ENCODE measurements at regions of chr2 and their contacts with region 1.

Region 1: DNA sequence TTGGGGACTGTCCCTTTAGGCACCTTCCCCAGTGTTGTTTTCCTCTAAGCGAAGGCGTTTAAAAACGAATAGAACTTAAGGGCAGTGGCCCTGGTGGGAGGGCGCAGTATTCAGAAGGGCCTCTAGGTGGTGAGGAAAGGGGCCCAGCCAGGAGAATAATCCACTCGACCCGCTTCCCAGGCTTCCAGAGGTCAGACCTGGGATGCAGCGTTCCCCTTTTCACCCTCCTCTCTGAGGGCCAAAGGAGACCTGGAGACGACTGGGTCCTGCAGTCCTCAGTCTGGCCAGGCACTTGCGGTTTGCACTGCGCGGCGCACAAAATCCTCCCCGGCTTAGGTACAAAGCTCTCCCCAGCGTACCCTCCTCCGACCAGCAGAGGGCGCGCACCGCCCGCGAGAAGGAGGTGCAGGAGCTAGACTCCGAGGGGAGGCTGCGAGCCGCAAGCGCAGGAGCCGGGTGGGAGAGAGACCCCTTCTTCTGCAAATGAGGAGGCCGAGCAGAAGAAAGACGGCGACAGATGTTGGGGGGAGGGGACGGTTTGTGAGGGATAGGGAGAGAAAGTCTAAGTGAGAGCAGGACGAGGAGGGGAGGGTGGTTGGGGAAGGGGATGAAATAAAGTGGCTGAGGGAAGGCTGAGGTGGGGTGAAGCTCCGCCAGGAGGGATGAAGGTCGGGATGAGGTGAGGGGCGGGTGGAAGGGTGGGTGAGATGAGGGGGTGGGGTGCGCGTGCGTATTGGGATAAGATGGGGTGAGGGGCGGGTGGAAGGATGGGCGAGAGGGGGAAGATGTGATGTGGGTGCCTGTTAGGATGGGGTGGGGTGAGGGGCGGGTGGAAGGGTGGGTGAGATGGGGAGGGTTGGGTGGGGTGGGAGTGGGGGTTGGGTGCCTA is 4.9 kb downstream of the FEV start:
- DNase-seq: peak in 1 of 2 experiments; percentile 97
- H3K4me3 ChIP-seq: peak overlapping the region in 2 of 4 experiments; percentile 12 to 48; a peak in 4 of 8 replicates
- H3K27ac ChIP-seq: no peak overlapping the region
- H3K4me1 ChIP-seq: peaks cover 0 to 25% (median 19%) of the 10 kb centered on the region in 4 experiments; a peak in 6 of 7 replicates
- H3K27me3 ChIP-seq: peaks cover 54 to 95% (median 79%) of the 10 kb centered on the region in 4 experiments
- CTCF ChIP-seq: peak in 2 of 3 experiments; percentile 94; a peak in 3 of 4 replicates
- EP300 ChIP-seq: no peak; a peak in 1 of 3 replicates
- POLR2A ChIP-seq: no peak
- RAD21 ChIP-seq: peak; percentile 79 to 83

Region 2: DNA sequence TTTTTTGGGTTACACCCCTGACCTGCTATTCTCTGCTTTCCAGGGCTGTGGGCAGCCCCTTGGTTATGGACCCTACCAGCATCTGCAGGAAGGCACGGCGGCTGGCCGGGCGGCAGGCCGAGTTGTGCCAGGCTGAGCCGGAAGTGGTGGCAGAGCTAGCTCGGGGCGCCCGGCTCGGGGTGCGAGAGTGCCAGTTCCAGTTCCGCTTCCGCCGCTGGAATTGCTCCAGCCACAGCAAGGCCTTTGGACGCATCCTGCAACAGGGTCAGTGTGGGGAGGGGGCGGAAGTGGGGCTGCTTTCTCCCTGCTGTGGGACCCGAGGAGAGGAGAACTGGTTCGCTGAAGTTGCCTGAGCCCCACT is 109.1 kb before region 1 on chr2:
- CTCF ChIA-PET with region 1: interaction called, 81 read pairs
- POLR2A ChIA-PET with region 1: interaction called, 9 read pairs
- DNase-seq: no peak
- H3K4me3 ChIP-seq: peak overlapping the region in 1 of 4 experiments; percentile 43; a peak in 2 of 8 replicates
- H3K27ac ChIP-seq: no peak overlapping the region
- H3K4me1 ChIP-seq: peaks cover 0 to 24% (median 12%) of the 10 kb centered on the region in 4 experiments; a peak in 6 of 7 replicates
- H3K27me3 ChIP-seq: peaks cover 89 to 100% (median 96%) of the 10 kb centered on the region in 4 experiments
- CTCF ChIP-seq: no peak
- EP300 ChIP-seq: no peak
- POLR2A ChIP-seq: no peak
- RAD21 ChIP-seq: no peak

Region 3: DNA sequence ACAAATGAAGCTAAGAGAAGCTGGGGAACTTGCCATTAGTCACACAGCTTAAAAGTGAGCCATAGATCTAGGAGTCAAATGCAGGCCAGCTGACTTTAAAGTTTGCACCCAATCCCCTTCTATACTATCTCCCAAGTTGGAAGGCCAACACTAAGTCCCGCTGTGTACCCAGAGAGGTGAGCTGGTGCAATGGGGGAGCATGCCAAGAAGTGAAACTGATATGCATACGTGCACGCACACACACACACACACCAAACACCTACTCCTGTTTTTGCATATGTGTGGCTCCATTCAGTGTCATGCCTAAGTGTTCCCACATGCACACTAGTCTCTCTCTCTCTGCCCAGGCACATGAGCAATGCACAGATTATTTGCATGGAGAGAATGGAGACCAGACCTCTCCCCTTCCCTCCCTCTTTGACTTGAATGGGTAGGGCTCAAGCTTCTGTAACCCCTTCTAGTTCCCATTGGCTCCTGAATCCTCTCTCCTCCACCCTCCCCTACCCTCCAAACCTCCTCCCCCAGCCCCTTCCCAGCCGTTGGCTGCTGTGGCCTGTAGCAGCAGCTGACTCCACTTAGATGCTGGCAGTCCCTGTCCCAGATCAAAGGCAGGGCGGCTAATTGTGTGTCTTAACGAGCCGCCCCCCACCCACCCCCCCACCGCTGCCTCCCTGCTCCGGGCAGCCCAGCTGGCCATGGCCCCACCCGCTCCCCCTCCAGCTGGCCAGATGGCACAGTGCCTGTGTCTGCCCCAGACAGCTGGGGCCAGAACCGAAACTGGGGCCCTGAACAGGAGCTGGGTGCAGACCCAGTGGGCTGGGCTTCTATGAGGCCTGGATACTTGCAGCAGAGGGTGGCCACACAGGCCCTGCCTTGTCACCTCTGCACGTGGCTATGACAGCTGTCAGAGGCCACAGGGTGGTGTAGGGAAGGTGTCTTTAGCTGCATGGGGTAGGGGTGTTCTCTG is 93.8 kb before region 1 on chr2:
- CTCF ChIA-PET with region 1: interaction called, 20 read pairs
- POLR2A ChIA-PET with region 1: no interaction called
- DNase-seq: no peak
- H3K4me3 ChIP-seq: no peak overlapping the region
- H3K27ac ChIP-seq: no peak overlapping the region
- H3K4me1 ChIP-seq: peaks cover 0 to 4% (median 2%) of the 10 kb centered on the region in 4 experiments; a peak in 4 of 7 replicates
- H3K27me3 ChIP-seq: peaks cover 76 to 93% (median 90%) of the 10 kb centered on the region in 4 experiments
- CTCF ChIP-seq: no peak
- EP300 ChIP-seq: no peak
- POLR2A ChIP-seq: no peak
- RAD21 ChIP-seq: no peak

Region 4: DNA sequence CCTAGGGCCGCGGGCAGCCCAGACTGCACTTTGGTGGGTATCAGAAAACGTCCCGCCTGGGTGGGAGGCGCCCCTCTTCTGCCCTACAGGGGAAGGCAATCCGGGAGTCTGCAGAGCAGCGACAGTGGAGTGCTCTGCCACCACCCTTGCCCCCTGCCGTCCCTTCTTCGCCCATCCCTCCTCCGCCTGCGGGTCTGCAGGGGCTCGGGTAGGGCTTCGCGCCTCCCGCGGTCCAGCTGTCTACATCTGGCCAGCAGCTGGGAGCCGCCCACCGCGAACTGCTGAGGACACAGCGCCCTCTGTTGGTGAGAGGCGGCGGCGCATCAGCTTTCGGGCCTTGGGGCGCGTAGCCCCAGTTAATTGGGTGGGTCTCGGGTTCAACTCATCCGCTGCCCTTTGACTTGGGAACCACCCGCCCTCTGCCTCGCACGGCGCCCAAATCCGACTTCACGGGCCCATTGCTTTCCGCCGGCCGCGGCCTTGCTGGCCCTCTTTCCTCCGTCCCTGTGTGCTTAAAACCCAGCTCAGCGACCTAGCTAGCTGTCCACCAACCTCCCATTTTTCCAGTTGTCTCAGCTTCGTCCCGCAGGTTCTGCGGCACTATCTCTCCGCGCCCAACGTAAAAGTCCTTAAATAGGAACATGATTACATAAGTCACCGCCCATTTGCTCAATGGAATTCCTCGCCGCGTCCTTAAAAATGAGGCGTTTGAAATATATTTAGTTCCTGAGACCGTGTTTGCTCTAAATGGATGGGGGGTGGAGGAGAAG is 81.8 kb before region 1 on chr2:
- CTCF ChIA-PET with region 1: interaction called, 35 read pairs
- POLR2A ChIA-PET with region 1: no interaction called
- DNase-seq: peak; percentile 68 to 99
- H3K4me3 ChIP-seq: peak overlapping the region in 1 of 4 experiments; percentile 54; a peak in 2 of 8 replicates
- H3K27ac ChIP-seq: no peak overlapping the region
- H3K4me1 ChIP-seq: peaks cover 3 to 35% (median 13%) of the 10 kb centered on the region in 4 experiments
- H3K27me3 ChIP-seq: peaks cover 64 to 81% (median 72%) of the 10 kb centered on the region in 4 experiments
- CTCF ChIP-seq: peak in 2 of 3 experiments; percentile 96 to 97; a peak in 3 of 4 replicates
- EP300 ChIP-seq: no peak
- POLR2A ChIP-seq: no peak
- RAD21 ChIP-seq: peak; percentile 82 to 92

Region 5: DNA sequence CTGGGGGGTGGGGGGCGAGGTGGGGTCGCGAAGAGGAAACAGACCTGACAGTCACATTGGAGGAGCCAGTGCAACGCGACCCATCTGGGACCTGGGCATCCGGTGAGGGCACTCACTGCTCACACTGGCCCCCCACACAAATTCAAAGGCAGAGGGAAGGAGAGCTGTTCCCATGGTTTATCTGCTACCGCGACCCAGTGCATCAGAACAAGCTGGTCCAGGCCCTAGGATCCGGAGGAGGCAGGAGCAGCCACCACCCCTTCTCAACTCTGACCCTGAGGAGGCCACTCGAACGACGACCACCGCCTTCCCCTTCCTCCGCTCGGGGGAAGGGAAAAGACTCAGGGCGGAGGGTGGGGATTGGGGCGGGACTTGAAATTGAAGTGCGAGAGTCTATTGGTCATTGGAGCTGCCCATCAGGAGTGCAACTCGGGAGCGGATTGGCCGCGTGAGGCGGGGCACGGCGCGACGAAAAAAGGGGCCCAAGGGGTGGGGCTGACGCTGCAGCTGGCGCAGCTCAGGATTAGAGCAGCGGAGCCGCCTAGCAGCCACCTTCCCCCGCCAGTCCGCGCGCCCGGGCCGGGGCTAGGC is 20.9 kb before region 1 on chr2 and contains the start of gene CDK5R2:
- CTCF ChIA-PET with region 1: interaction called, 34 read pairs
- POLR2A ChIA-PET with region 1: interaction called, 9 read pairs
- DNase-seq: peak; percentile 74 to 98
- H3K4me3 ChIP-seq: peak within 1 kb of the TSS; percentile 61 to 74 (median 68)
- H3K27ac ChIP-seq: no peak within 1 kb of the TSS
- H3K4me1 ChIP-seq: peaks cover 9 to 29% (median 18%) of the 10 kb centered on the region in 4 experiments
- H3K27me3 ChIP-seq: peaks cover 31 to 69% (median 54%) of the 10 kb centered on the region in 4 experiments
- CTCF ChIP-seq: no peak
- EP300 ChIP-seq: no peak
- POLR2A ChIP-seq: no peak
- RAD21 ChIP-seq: no peak
- total RNA-seq, gene CDK5R2: not detected in 2 replicates

Region 6: GRCh38 chr2:219057709-219058540 is 77.8 kb after region 1 on chr2:
- CTCF ChIA-PET with region 1: interaction called, 11 read pairs
- POLR2A ChIA-PET with region 1: no interaction called
- DNase-seq: peak; percentile 53 to 90
- H3K4me3 ChIP-seq: peak overlapping the region in 3 of 4 experiments; percentile 30 to 53 (median 38); a peak in 5 of 8 replicates
- H3K27ac ChIP-seq: no peak overlapping the region
- H3K4me1 ChIP-seq: peaks cover 0 to 27% (median 13%) of the 10 kb centered on the region in 4 experiments; a peak in 6 of 7 replicates
- H3K27me3 ChIP-seq: peaks cover 66 to 88% (median 78%) of the 10 kb centered on the region in 4 experiments
- CTCF ChIP-seq: peak in 2 of 3 experiments; percentile 94 to 97; a peak in 3 of 4 replicates
- EP300 ChIP-seq: no peak; a peak in 1 of 3 replicates
- POLR2A ChIP-seq: no peak
- RAD21 ChIP-seq: peak; percentile 96